ENCODE measurements at regions of chr11 and their contacts with region 1.

Region 1: DNA sequence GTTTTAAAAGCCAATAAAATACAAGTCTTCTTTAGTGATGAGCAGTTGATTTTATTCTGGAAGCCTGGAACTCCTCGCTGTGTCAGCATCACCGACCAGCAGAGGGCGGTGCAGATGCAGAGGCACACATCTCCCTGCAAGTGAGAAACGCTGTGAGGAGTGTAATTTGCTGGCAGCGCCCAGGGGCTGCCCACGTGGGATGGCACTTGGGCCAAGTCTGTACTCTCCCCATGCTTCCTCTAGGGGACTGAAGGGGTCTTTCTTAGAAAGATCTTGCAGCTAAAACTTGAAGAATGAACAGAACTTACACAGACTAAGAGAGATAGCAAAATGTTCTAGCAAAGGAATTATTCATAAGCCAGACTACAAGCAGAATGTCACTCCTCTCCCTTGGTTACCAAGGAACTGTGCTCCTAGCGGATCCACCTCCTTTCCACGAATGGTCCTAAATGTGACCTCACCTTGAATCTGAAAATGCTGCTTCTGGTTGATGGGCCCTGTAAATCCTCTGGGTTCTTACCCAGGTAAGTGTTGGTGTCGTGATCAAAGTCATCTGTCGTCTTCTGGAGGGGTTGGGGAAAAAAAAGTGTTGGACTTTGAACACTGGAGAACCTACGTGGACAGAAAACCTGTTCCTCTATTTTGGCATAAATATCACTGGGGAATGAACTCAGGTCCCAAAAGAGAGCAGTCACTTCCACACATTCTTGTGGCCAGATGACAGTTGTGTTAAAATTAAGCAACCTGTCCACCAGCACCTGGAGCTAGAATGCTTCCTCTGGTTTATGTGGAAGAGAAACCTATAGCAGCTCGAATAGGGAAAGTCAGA is 31.8 kb downstream of the CNTF start:
- DNase-seq: peak; percentile 64
- H3K4me3 ChIP-seq: peak overlapping the region in 1 of 2 experiments; percentile 27; a peak in 1 of 4 replicates
- H3K27ac ChIP-seq: no peak overlapping the region
- H3K4me1 ChIP-seq: no peaks in the 10 kb centered on the region
- H3K27me3 ChIP-seq: no peaks in the 10 kb centered on the region
- CTCF ChIP-seq: peak; percentile 96
- EP300 ChIP-seq: no peak
- RAD21 ChIP-seq: peak; percentile 77

Region 2: GRCh38 chr11:58600510-58600909 is 53.8 kb before region 1 on chr11:
- CTCF ChIA-PET with region 1: no interaction called
- POLR2A ChIA-PET with region 1: no interaction called
- DNase-seq: no peak
- H3K4me3 ChIP-seq: no peak overlapping the region
- H3K27ac ChIP-seq: no peak overlapping the region
- H3K4me1 ChIP-seq: peaks cover 0 to 8% of the 10 kb centered on the region in 2 experiments; a peak in 2 of 4 replicates
- H3K27me3 ChIP-seq: no peaks in the 10 kb centered on the region
- CTCF ChIP-seq: no peak
- EP300 ChIP-seq: no peak
- RAD21 ChIP-seq: no peak

Region 3: DNA sequence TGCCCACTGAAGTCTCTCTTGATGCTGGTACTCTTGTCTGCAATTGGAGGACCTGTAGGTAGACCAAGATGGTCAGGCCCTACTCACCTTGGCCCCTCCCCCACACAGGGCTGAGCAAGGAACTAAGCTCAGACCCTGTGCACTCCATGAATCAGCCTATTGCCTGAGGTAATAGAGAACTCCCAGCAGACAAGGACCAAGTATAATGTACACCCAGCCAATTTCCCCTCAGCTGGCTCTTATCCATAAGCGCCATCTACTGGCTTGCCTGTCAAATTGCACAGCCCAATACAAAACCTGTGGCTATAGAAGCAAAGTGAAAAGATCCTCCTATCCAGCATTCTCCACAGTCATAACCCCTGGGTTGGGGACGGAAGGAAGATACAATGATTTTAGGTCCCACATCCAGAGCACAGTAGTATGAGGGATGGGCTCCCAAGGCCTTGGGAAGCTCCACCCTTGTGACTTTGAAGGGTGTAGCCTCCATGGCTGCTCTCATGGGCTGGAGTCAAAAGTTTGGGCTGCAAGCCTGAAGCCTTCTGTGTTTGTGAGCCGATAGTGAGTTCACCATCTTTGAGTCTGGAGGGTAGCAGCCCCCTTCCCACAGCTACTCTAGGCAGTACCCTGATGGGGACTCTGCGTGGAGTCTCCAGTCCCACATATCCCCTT is 134.2 kb after region 1 on chr11:
- CTCF ChIA-PET with region 1: interaction called, 15 read pairs
- POLR2A ChIA-PET with region 1: no interaction called
- DNase-seq: peak; percentile 34
- H3K4me3 ChIP-seq: no peak overlapping the region
- H3K27ac ChIP-seq: no peak overlapping the region
- H3K4me1 ChIP-seq: no peaks in the 10 kb centered on the region
- H3K27me3 ChIP-seq: no peaks in the 10 kb centered on the region; the same call in 1 of the 2 replicates
- CTCF ChIP-seq: peak; percentile 80
- EP300 ChIP-seq: no peak
- RAD21 ChIP-seq: peak; percentile 86